ENCODE measurements at regions of chr11 and their contacts with region 1.

Region 1: GRCh38 chr11:64000026-64000739 is 13.9 kb downstream of the OTUB1 start:
- DNase-seq: peak; percentile 86
- ATAC-seq: peak; percentile 88

Region 2: GRCh38 chr11:64152841-64153691 is 152.9 kb after region 1 on chr11:
- intact Hi-C with region 1: loop called (anchors 5 kb)
- DNase-seq: peak; percentile 85
- ATAC-seq: peak; percentile 54